H1 (cell line): ENCODE measurements at regions of chr18 and their contacts with region 1.

Region 1: GRCh38 chr18:45730832-45731575 is 7.0 kb downstream of the SLC14A1 start:
- DNase-seq: no peak
- H3K4me3 ChIP-seq: no peak overlapping the region
- H3K27ac ChIP-seq: no peak overlapping the region
- H3K4me1 ChIP-seq: no peaks in the 10 kb centered on the region
- H3K27me3 ChIP-seq: no peaks in the 10 kb centered on the region
- CTCF ChIP-seq: no peak
- EP300 ChIP-seq: no peak
- POLR2A ChIP-seq: no peak
- RAD21 ChIP-seq: no peak

Region 2: DNA sequence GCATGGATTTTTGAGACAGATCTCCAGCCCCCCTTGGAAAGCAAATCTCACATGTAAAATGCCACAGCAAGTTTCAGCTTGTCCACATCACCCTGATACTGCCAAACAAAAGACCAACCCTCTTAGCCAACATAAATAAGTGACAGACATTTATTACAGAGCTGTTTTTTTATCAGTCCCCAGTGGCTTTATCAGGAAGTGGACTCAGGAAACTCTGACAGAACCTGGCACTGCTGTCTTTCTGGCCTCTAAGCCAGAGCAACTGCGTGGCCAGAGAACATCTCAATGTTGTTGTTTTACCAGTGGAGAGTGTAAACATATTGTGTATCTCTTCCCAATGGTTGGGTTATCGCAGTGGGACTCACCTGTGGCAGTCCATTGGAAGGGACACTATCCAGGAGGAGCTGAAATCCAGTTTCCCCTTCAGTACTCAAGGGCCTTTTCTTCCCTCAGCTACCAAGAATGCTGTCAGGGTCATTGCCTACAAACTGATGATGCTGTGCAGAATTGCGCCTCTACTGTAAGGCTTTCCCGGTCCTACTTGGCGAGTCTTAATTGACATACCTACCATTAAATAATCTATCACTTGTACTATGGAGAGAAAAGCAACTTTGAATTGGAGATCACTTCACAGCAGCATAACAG is 14.9 kb after region 1 on chr18:
- CTCF ChIA-PET with region 1: interaction called, 143 read pairs
- POLR2A ChIA-PET with region 1: no interaction called
- DNase-seq: no peak
- H3K4me3 ChIP-seq: no peak overlapping the region
- H3K27ac ChIP-seq: no peak overlapping the region
- H3K4me1 ChIP-seq: peaks cover 0 to 2% (median under 1%) of the 10 kb centered on the region in 4 experiments; a peak in 1 of 7 replicates
- H3K27me3 ChIP-seq: no peaks in the 10 kb centered on the region
- CTCF ChIP-seq: no peak
- EP300 ChIP-seq: no peak
- POLR2A ChIP-seq: no peak
- RAD21 ChIP-seq: no peak

Region 3: DNA sequence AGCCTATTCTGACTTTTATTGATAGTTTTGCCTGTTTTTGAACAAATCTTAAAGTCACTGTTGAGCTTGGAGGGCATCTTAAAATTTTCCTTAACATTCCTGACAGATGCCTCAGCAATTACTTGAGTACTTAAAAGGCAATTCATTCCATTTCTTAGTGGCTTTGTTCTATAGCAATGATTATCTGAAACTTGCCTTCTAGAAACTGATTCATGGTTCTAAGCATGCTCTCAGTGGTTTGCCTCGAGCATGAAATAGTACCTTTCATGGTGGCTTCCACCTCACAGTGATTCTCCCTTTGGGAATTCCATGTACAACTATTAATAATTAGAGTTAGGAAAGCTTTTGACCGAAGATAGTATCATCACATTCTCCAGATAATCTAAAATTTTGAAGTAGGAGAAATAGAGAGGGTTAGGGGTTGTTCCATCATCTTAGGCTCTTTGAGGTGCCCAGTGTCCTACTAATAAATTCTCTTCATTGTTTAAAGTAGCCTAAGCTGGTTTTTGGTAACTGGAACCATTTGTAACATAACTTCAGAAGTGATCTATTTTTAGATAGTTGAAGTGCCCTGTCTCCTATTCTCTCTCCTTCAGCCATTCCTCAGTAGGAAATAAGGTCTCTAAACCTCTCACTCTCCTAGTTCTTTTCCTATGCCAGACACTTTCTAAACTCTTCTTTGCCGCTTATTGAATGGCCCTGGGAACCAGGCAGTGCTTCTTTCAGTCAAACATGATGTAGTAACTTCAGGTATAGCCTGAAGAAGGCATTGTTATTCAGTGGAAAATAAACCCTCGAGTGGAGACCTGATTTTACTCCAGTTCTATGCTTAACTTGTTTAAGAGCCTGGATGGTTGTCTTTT is 529.2 kb after region 1 on chr18:
- CTCF ChIA-PET with region 1: no interaction called
- POLR2A ChIA-PET with region 1: no interaction called
- DNase-seq: no peak
- H3K4me3 ChIP-seq: no peak overlapping the region
- H3K27ac ChIP-seq: no peak overlapping the region
- H3K4me1 ChIP-seq: peaks cover 8 to 44% (median 31%) of the 10 kb centered on the region in 4 experiments
- H3K27me3 ChIP-seq: no peaks in the 10 kb centered on the region
- CTCF ChIP-seq: no peak
- EP300 ChIP-seq: no peak
- POLR2A ChIP-seq: no peak
- RAD21 ChIP-seq: no peak